ENCODE measurements at regions of chr3 and their contacts with region 1.

Region 1: GRCh38 chr3:62188681-62189383 is 184.5 kb downstream of the FEZF2 start:
- DNase-seq: peak; percentile 65 to 67
- H3K4me3 ChIP-seq: no peak overlapping the region
- H3K4me3 Mint-ChIP-seq: peak overlapping the region; percentile 50
- H3K27ac Mint-ChIP-seq: no peak overlapping the region
- H3K4me1 ChIP-seq: no peaks in the 10 kb centered on the region; the same call in 1 of the 2 replicates
- H3K4me1 Mint-ChIP-seq: peaks cover 17% of the 10 kb centered on the region
- H3K27me3 ChIP-seq: no peaks in the 10 kb centered on the region
- H3K27me3 Mint-ChIP-seq: no peaks in the 10 kb centered on the region
- CTCF ChIP-seq: peak; percentile 65 to 73

Region 2: DNA sequence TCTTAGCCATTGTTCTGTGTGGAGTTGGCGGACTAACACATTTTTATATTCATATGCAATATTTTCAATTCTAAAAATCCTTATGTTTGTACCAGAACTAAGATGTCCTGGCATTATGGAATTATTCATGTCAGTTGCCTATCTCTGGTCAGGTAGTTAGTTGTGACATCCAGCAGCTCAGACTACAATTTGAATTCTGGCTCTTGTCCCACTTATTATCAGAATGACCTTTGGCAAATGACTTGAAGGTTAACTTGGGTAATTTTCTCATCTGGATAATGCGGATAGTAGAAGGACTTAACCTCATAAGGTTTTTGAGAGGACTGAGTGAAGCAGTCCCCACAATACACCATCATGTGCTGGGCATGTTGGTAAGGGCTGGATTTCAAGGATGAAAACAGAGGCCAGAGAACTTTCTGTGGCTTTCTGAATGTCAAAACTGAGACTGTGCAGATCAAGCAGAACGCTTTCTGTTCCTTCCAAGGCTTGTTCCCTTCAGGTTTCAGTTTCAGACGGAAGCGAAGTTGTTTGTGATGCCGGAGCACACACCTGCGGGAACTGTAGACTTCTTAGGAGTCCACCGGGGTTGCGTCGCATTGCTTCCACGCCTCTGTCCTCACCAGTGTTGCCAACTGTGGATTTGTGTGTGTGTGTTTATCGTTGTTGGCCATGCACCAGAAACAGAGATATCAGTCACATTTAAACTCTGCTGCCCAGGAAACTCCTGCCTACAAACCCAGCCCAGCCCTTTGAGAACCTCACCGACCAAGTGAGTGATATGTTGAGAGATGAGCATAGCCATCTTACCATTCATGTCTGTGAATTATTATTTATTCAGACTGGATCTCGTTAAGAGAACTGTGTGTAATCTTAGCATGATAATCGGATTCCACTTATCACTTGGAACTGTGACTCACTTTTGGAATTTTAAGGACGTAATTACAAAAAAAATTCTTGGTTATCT is 551.5 kb before region 1 on chr3:
- CTCF ChIA-PET with region 1: no interaction called
- POLR2A ChIA-PET with region 1: no interaction called
- intact Hi-C with region 1: loop called (anchors 5 kb)
- DNase-seq: peak; percentile 28 to 53
- H3K4me3 ChIP-seq: peak overlapping the region; percentile 32
- H3K4me3 Mint-ChIP-seq: peak overlapping the region; percentile 73
- H3K27ac Mint-ChIP-seq: peak overlapping the region; percentile 72
- H3K4me1 ChIP-seq: peaks cover 42% of the 10 kb centered on the region
- H3K4me1 Mint-ChIP-seq: peaks cover 7% of the 10 kb centered on the region
- H3K27me3 ChIP-seq: no peaks in the 10 kb centered on the region
- H3K27me3 Mint-ChIP-seq: no peaks in the 10 kb centered on the region
- CTCF ChIP-seq: no peak

Region 3: GRCh38 chr3:61858056-61858455 is 330.8 kb before region 1 on chr3:
- CTCF ChIA-PET with region 1: interaction called, 5 read pairs
- POLR2A ChIA-PET with region 1: no interaction called
- intact Hi-C with region 1: loop called (anchors 1 kb)
- DNase-seq: no peak
- H3K4me3 ChIP-seq: no peak overlapping the region
- H3K4me3 Mint-ChIP-seq: no peak overlapping the region
- H3K27ac Mint-ChIP-seq: no peak overlapping the region
- H3K4me1 ChIP-seq: no peaks in the 10 kb centered on the region; the same call in 1 of the 2 replicates
- H3K4me1 Mint-ChIP-seq: no peaks in the 10 kb centered on the region
- H3K27me3 ChIP-seq: no peaks in the 10 kb centered on the region
- H3K27me3 Mint-ChIP-seq: no peaks in the 10 kb centered on the region
- CTCF ChIP-seq: peak in 1 of 2 experiments; percentile 13

Region 4: DNA sequence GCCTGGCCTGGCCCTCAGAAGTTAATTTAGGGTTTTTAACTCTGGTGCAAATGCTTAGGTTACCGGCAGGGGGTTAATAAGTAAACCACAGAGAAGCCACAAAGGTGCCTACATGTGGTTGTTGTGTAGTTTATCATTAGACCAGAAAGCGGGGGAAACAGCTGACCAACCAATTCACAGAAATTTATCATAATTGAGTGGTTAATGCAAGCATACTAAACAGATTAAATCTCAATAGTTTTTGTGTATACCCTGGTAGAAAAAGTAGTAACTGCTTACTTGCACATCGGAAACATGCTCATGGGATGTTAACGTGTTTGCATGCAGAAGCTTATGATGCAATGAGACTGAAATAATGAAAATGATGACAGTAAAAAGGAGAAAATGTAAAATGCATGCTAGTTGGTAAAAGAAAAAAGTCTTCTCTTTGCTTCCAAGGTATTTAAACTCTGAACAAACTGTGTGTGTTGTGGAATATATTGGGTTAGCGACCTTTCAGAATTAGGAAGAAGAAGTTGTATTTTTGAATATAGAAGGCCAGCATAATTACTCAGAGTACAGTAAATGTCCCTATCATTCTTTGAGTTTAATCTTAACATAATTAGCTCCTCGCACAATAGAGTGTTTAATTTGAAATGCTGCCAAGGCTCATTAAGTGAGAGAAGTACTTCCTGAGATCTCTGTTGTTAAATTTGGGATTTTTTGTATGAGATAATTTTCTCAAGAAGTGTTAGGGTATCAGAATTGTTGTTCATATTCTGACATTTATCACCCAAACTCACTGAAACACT is 311.3 kb before region 1 on chr3:
- CTCF ChIA-PET with region 1: no interaction called
- POLR2A ChIA-PET with region 1: no interaction called
- intact Hi-C with region 1: loop called (anchors 5 kb)
- DNase-seq: peak in 1 of 2 experiments; percentile 38
- H3K4me3 ChIP-seq: no peak overlapping the region
- H3K4me3 Mint-ChIP-seq: no peak overlapping the region
- H3K27ac Mint-ChIP-seq: peak overlapping the region; percentile 66
- H3K4me1 ChIP-seq: peaks cover 7% of the 10 kb centered on the region
- H3K4me1 Mint-ChIP-seq: peaks cover 7% of the 10 kb centered on the region
- H3K27me3 ChIP-seq: no peaks in the 10 kb centered on the region
- H3K27me3 Mint-ChIP-seq: no peaks in the 10 kb centered on the region
- CTCF ChIP-seq: peak; percentile 35 to 39